Natural killer cell (primary cell): ENCODE measurements at regions of chr3 and their contacts with region 1.

Region 1: GRCh38 chr3:172171396-172172075 is 132.2 kb downstream of the FNDC3B start:
- DNase-seq: no peak
- ATAC-seq: no peak
- H3K4me3 ChIP-seq: no peak overlapping the region
- H3K4me3 Mint-ChIP-seq: no peak overlapping the region
- H3K27ac ChIP-seq: no peak overlapping the region
- H3K27ac Mint-ChIP-seq: no peak overlapping the region
- H3K4me1 ChIP-seq: peaks cover 19% of the 10 kb centered on the region
- H3K4me1 Mint-ChIP-seq: peaks cover 76 to 78% of the 10 kb centered on the region in 2 donors
- H3K27me3 ChIP-seq: no peaks in the 10 kb centered on the region
- H3K27me3 Mint-ChIP-seq: no peaks in the 10 kb centered on the region
- CTCF ChIP-seq: no peak

Region 2: GRCh38 chr3:172115787-172116186 is 55.7 kb before region 1 on chr3:
- intact Hi-C with region 1: no loop called
- DNase-seq: no peak
- ATAC-seq: no peak
- H3K4me3 ChIP-seq: no peak overlapping the region
- H3K4me3 Mint-ChIP-seq: no peak overlapping the region
- H3K27ac ChIP-seq: no peak overlapping the region
- H3K27ac Mint-ChIP-seq: peak overlapping the region in 1 of 2 donors; percentile 12
- H3K4me1 ChIP-seq: peaks cover under 1% of the 10 kb centered on the region
- H3K4me1 Mint-ChIP-seq: peaks cover 56 to 61% of the 10 kb centered on the region in 2 donors
- H3K27me3 ChIP-seq: no peaks in the 10 kb centered on the region
- H3K27me3 Mint-ChIP-seq: no peaks in the 10 kb centered on the region
- CTCF ChIP-seq: no peak

Region 3: GRCh38 chr3:172142051-172142863 is 29.3 kb before region 1 on chr3:
- intact Hi-C with region 1: loop called (anchors 2 kb)
- DNase-seq: no peak
- ATAC-seq: peak; percentile 22 to 47 (median 43)
- H3K4me3 ChIP-seq: no peak overlapping the region
- H3K4me3 Mint-ChIP-seq: peak overlapping the region; percentile 78
- H3K27ac ChIP-seq: peak overlapping the region; percentile 72
- H3K27ac Mint-ChIP-seq: peak overlapping the region; percentile 82 to 88
- H3K4me1 ChIP-seq: peaks cover 51% of the 10 kb centered on the region
- H3K4me1 Mint-ChIP-seq: peaks cover 87 to 88% of the 10 kb centered on the region in 2 donors
- H3K27me3 ChIP-seq: no peaks in the 10 kb centered on the region
- H3K27me3 Mint-ChIP-seq: no peaks in the 10 kb centered on the region
- CTCF ChIP-seq: no peak

Region 4: GRCh38 chr3:172208586-172209332 is 37.2 kb after region 1 on chr3:
- intact Hi-C with region 1: loop called (anchors 5 kb)
- DNase-seq: peak in 1 of 2 donors; percentile 23
- ATAC-seq: peak; percentile 73 to 78 (median 76)
- H3K4me3 ChIP-seq: no peak overlapping the region
- H3K4me3 Mint-ChIP-seq: peak overlapping the region; percentile 62
- H3K27ac ChIP-seq: peak overlapping the region; percentile 46
- H3K27ac Mint-ChIP-seq: peak overlapping the region; percentile 68 to 86
- H3K4me1 ChIP-seq: peaks cover 18% of the 10 kb centered on the region
- H3K4me1 Mint-ChIP-seq: peaks cover 69 to 72% of the 10 kb centered on the region in 2 donors
- H3K27me3 ChIP-seq: no peaks in the 10 kb centered on the region
- H3K27me3 Mint-ChIP-seq: no peaks in the 10 kb centered on the region
- CTCF ChIP-seq: no peak